Mammary epithelial cell (primary cell): ENCODE measurements at regions of chr19 and their contacts with region 1.

Region 1: GRCh38 chr19:52679598-52679997 is 41.4 kb upstream of the ZNF83 start:
- DNase-seq: no peak
- H3K4me3 ChIP-seq: no peak overlapping the region
- H3K27ac ChIP-seq: no peak overlapping the region
- H3K4me1 ChIP-seq: no peaks in the 10 kb centered on the region
- H3K27me3 ChIP-seq: no peaks in the 10 kb centered on the region
- CTCF ChIP-seq: no peak

Region 2: GRCh38 chr19:52601025-52601973 is 78.3 kb before region 1 on chr19:
- CTCF ChIA-PET with region 1: no interaction called
- dilution Hi-C with region 1: loop called (anchors 5 kb)
- in situ Hi-C with region 1: no loop called
- intact Hi-C with region 1: no loop called
- DNase-seq: peak; percentile 89
- H3K4me3 ChIP-seq: peak overlapping the region; percentile 63 to 69 (median 66)
- H3K27ac ChIP-seq: peak overlapping the region; percentile 3
- H3K4me1 ChIP-seq: peaks cover 12% of the 10 kb centered on the region
- H3K27me3 ChIP-seq: no peaks in the 10 kb centered on the region
- CTCF ChIP-seq: peak in 1 of 2 donors; percentile 42